Heart left ventricle (tissue), 16 donors: ENCODE measurements at regions of chr11 and their contacts with region 1.

Region 1: GRCh38 chr11:36306888-36307287 is 10.8 kb downstream of the PRR5L start:
- DNase-seq: no peak
- ATAC-seq: no peak
- H3K4me3 ChIP-seq: no peak overlapping the region
- H3K27ac ChIP-seq: no peak overlapping the region
- H3K4me1 ChIP-seq: peaks cover 0 to 20% (median 0%) of the 10 kb centered on the region in 12 donors
- H3K27me3 ChIP-seq: no peaks in the 10 kb centered on the region
- CTCF ChIP-seq: peak in 8 of 12 donors; percentile 10 to 46 (median 32)
- POLR2A ChIP-seq: no peak

Region 2: DNA sequence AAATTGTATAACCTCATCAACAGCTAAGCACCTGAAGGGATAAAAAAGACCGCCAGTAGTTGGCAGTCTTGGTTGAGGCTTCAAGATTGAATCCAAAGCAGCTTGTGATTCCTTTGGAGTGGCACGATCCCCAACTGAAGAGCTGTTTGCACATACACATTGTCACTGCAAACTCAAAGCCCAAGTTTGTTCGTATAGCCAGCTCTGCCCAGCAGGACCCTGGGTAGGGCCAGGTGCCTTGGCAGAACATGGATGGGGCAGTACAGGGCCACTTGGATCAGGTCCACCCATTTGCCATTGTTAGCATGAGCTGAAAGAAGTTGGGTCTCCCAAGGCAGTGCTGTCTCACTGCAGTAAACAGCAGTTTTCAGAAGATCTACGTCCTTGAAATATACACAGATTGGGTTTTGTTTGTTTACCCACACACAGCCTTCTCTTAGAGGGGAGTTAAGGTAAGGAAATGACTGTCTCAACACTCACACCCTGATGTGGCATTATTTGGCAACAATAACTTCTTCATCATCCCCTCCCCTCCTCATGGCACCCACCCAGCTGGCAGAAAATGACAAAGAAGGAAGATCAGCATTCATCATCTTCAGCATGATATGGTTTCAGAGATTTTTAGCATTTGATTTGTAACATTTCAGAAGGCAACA is 150.6 kb before region 1 on chr11:
- intact Hi-C with region 1: no loop called
- DNase-seq: no peak
- ATAC-seq: no peak
- H3K4me3 ChIP-seq: no peak overlapping the region
- H3K27ac ChIP-seq: peak overlapping the region in 8 of 12 donors; percentile 9 to 58 (median 42)
- H3K4me1 ChIP-seq: peaks cover 0 to 51% (median 11%) of the 10 kb centered on the region in 12 donors
- H3K27me3 ChIP-seq: no peaks in the 10 kb centered on the region
- CTCF ChIP-seq: no peak
- POLR2A ChIP-seq: no peak

Region 3: GRCh38 chr11:36478700-36479329 is 171.9 kb after region 1 on chr11:
- intact Hi-C with region 1: loop called in 7 of 10 experiments (anchors 5 kb)
- DNase-seq: peak in 1 of 5 donors; percentile 30
- ATAC-seq: peak in 3 of 4 donors; percentile 70 to 80 (median 78)
- H3K4me3 ChIP-seq: no peak overlapping the region
- H3K27ac ChIP-seq: no peak overlapping the region
- H3K4me1 ChIP-seq: peaks cover 0 to 17% (median 5%) of the 10 kb centered on the region in 12 donors
- H3K27me3 ChIP-seq: no peaks in the 10 kb centered on the region
- CTCF ChIP-seq: peak; percentile 25 to 77 (median 62)
- POLR2A ChIP-seq: no peak

Region 4: GRCh38 chr11:36492724-36493304 is 185.9 kb after region 1 on chr11:
- intact Hi-C with region 1: loop called in 1 of 10 experiments (anchors 5 kb)
- DNase-seq: no peak
- ATAC-seq: peak in 3 of 4 donors; percentile 50 to 55 (median 51)
- H3K4me3 ChIP-seq: no peak overlapping the region
- H3K27ac ChIP-seq: no peak overlapping the region
- H3K4me1 ChIP-seq: peaks cover 0 to 13% (median 5%) of the 10 kb centered on the region in 12 donors
- H3K27me3 ChIP-seq: no peaks in the 10 kb centered on the region
- CTCF ChIP-seq: peak; percentile 70 to 89 (median 79)
- POLR2A ChIP-seq: no peak